RWPE1 (cell line): ENCODE measurements at regions of chr2 and their contacts with region 1.

Region 1: GRCh38 chr2:137865954-137866540 is 98.2 kb upstream of the HNMT start:
- DNase-seq: peak; percentile 34
- H3K27ac ChIP-seq: no peak overlapping the region
- CTCF ChIP-seq: peak; percentile 71

Region 2: GRCh38 chr2:137910641-137911040 is 44.6 kb after region 1 on chr2:
- CTCF ChIA-PET with region 1: no interaction called
- POLR2A ChIA-PET with region 1: interaction called, 10 read pairs
- DNase-seq: peak; percentile 18
- H3K27ac ChIP-seq: no peak overlapping the region
- CTCF ChIP-seq: peak; percentile 67

Region 3: DNA sequence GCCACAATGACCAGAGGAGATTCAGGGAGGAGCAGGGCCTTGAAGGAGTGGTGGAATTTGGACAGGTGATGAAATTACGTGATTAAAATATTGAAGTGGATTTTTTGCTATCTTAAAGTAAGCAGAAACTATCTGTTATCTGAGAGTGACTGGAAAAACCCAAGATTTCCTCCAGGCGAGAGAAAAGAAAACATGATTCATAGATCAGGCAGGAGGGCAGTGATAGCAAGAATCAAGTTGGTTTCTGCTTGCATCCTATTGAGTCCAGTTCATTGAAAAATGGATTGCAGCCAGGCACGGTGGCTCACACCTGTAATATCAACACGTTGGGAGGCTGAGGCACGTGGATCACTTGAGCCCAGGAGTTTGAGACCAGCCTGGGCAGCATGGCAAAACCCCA is 786.3 kb after region 1 on chr2:
- CTCF ChIA-PET with region 1: no interaction called
- POLR2A ChIA-PET with region 1: no interaction called
- DNase-seq: no peak
- H3K27ac ChIP-seq: no peak overlapping the region
- CTCF ChIP-seq: no peak